WTC11 (cell line): ENCODE measurements at regions of chr10 and their contacts with region 1.

Region 1: GRCh38 chr10:73997787-73998622 is at the start of gene VCL:
- DNase-seq: peak; percentile 99
- ATAC-seq: peak; percentile 93
- H3K4me3 Mint-ChIP-seq: peak within 1 kb of the TSS; percentile 98
- H3K27ac Mint-ChIP-seq: peak within 1 kb of the TSS; percentile 100
- H3K4me1 Mint-ChIP-seq: peaks cover 41% of the 10 kb centered on the region
- H3K27me3 Mint-ChIP-seq: peaks cover 2% of the 10 kb centered on the region; the same call in 1 of the 2 replicates
- CTCF ChIP-seq: no peak
- total RNA-seq, gene VCL: 225 to 236 TPM (median 234 TPM) in 3 replicates

Region 2: GRCh38 chr10:73926152-73926764 is 71.7 kb before region 1 on chr10:
- CTCF ChIA-PET with region 1: no interaction called
- POLR2A ChIA-PET with region 1: no interaction called
- DNase-seq: no peak
- ATAC-seq: no peak
- H3K4me3 Mint-ChIP-seq: no peak overlapping the region
- H3K27ac Mint-ChIP-seq: no peak overlapping the region
- H3K4me1 Mint-ChIP-seq: peaks cover 35% of the 10 kb centered on the region
- H3K27me3 Mint-ChIP-seq: no peaks in the 10 kb centered on the region; the same call in 1 of the 2 replicates
- CTCF ChIP-seq: no peak

Region 3: DNA sequence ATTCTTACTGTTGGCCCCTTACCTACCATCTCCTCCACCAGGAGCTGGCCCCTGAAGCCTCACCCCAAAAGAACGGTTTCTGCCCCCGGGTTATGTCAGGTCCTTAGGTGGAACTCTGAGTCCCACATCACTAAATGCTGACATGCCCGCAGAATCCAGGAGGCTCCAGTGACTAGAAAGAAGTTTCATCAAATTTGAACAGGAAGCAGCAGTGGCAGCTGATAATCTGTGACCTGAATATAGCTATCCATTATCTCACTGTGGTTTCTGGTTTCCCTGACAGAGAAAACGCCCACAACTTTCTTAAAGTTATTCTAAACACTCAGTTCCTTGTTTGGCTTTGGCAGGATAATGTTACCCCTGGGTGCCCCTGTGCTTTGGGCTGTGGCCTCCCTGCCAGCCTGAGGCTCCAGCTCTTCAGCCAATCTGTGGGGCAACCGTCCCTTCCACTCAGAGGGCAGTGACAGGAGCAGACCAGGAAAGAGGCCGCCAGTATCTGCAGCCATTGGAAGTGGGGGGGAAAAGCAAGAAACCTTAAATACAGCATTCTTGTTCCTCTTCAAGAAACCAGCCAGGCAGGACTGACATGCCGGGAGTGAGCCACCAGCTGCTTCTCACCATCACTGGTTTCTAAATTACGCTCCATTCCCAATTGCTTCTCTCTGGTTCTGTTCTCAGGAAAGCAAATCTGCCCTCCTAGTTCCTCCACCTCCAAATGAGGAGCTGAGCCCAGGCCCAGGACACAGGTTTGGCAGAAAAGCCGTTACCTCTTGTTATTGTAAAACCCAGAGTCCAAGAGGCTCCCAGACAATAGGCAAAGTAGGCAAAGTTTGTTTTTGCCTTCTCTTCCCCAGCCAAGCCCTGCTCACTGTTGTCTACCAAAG is 41.3 kb before region 1 on chr10:
- CTCF ChIA-PET with region 1: interaction called, 10 read pairs
- POLR2A ChIA-PET with region 1: interaction called, 4 read pairs
- DNase-seq: no peak
- ATAC-seq: peak; percentile 43
- H3K4me3 Mint-ChIP-seq: no peak overlapping the region
- H3K27ac Mint-ChIP-seq: no peak overlapping the region; the same call in 1 of the 2 replicates
- H3K4me1 Mint-ChIP-seq: peaks cover 10% of the 10 kb centered on the region
- H3K27me3 Mint-ChIP-seq: no peaks in the 10 kb centered on the region
- CTCF ChIP-seq: no peak

Region 4: DNA sequence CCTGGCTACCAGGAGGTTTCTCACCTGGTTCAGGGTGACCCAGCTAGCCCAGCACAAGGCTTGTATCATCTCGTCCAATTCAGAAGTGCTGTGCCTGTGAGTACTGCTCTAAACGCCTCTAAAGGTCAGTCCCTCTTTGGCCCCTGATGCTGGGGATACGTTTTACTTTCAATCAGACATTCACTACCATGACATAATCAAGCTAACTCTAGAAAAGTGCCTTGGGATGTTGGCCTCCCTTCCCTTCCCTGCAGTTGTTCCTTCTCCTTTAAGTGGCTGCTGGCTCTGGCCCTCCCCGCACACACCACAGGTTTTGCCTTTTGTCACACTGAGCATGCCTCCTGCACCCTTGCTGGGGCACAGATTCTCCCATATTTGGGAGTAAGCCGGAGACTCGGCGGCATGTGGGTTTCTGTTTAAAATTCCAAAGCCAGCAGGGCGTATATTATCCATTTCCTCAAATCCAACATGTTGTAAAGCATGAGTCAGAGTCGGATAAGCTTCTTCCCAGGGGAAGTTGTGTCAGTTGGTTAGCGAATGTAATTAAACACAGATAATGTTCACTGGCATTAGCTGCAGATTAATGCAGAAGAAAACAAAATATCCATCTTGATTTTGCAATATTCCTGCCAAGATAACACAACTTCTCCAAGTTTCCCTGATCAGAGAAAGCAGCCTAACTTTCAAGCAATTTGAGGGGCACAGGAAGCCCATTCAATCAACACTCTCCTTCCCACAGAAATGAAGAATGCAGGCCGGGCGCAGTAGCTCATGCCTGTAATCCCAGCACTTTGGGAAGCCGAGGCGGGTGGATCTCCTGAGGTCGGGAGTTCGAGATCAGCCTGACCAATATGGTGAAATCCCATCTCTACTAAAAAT is 31.9 kb before region 1 on chr10:
- CTCF ChIA-PET with region 1: interaction called, 33 read pairs
- POLR2A ChIA-PET with region 1: interaction called, 140 read pairs
- DNase-seq: peak; percentile 86
- ATAC-seq: peak; percentile 87
- H3K4me3 Mint-ChIP-seq: peak overlapping the region; percentile 59
- H3K27ac Mint-ChIP-seq: peak overlapping the region; percentile 100
- H3K4me1 Mint-ChIP-seq: peaks cover 69% of the 10 kb centered on the region
- H3K27me3 Mint-ChIP-seq: no peaks in the 10 kb centered on the region
- CTCF ChIP-seq: no peak

Region 5: DNA sequence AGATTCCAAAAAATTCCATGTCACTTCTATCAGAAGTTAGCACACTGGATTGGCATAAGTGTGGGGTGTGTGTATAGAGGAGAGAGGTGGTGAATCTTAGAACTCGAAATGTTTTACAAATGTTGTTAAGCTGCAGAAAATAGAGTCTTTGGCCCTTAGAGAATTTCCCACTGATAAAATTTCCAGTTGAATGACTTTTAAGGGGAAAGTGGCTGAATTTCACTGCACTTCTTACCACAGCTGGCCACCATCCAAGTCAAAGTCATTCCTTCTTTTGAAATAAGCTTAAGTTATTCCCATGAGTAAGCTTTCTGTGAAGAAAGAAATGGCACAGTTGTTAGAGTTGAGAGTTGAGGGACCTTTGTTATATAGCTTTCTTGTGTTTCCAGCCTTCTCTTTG is 13.8 kb after region 1 on chr10:
- CTCF ChIA-PET with region 1: no interaction called
- POLR2A ChIA-PET with region 1: interaction called, 24 read pairs
- DNase-seq: no peak
- ATAC-seq: no peak
- H3K4me3 Mint-ChIP-seq: no peak overlapping the region
- H3K27ac Mint-ChIP-seq: peak overlapping the region; percentile 54; the same call in 1 of the 2 replicates
- H3K4me1 Mint-ChIP-seq: peaks cover 44% of the 10 kb centered on the region
- H3K27me3 Mint-ChIP-seq: no peaks in the 10 kb centered on the region
- CTCF ChIP-seq: no peak

Region 6: DNA sequence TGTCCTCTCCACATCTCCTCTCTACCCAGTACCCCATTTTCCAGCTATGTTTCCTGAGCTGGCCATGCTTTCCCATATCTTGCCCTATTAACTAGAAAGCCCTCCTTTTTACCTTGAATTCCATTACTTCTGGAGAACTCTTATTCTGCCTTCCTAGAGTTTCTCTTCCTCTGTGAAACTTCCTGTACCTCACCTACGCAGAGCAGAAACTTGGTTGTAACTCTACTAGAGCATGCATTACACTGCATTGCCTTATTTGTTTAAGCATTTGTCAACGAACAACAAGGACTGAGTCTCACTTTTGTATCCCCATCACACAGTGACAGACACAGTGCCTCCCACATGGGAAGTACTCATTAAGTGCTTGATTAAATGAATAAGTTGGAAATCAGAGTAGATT is 36.3 kb after region 1 on chr10:
- CTCF ChIA-PET with region 1: no interaction called
- POLR2A ChIA-PET with region 1: no interaction called
- DNase-seq: no peak
- ATAC-seq: no peak
- H3K4me3 Mint-ChIP-seq: no peak overlapping the region
- H3K27ac Mint-ChIP-seq: peak overlapping the region; percentile 59
- H3K4me1 Mint-ChIP-seq: peaks cover 61% of the 10 kb centered on the region
- H3K27me3 Mint-ChIP-seq: no peaks in the 10 kb centered on the region
- CTCF ChIP-seq: no peak